ENCODE measurements at regions of chr3 and their contacts with region 1.

Region 1: GRCh38 chr3:130759699-130760338 is 13.2 kb upstream of the PIK3R4 start:
- DNase-seq: peak; percentile 66
- CTCF ChIP-seq: peak; percentile 74

Region 2: GRCh38 chr3:130870423-130870822 is 110.6 kb after region 1 on chr3:
- in situ Hi-C with region 1: no loop called
- DNase-seq: no peak
- CTCF ChIP-seq: no peak

Region 3: DNA sequence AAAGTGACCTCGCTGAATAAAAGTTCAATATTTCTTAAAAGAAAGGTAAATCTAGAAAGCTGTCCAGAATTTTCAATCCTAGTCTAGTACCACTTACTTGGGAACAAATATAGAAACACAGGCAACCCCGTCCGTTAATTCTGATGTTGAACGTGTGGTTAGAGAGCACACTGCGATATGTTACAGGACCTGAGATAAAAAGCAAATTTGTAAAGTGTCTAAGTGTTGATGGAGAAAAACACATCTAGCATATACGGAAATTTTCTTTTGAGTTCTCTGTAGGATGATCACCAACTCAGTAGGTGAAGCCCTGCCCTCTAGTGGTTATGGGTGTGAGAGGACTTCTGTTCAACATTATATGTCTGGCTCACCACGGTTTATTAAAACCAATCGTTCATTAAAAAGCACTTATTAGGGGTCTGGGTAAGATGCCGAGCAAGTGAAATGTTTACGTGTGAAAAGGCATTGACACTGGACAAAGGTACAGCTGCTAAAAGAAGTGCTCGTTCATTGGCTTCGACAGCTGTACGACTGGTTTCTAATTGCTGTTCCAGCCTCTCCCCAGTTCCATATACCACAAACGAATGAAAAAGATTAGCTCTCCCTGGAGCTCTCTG is 133.0 kb after region 1 on chr3:
- in situ Hi-C with region 1: loop called (anchors 10 kb)
- DNase-seq: peak; percentile 79
- CTCF ChIP-seq: peak; percentile 79

Region 4: GRCh38 chr3:130997291-130997690 is 237.5 kb after region 1 on chr3:
- in situ Hi-C with region 1: loop called (anchors 25 kb)
- DNase-seq: no peak
- CTCF ChIP-seq: no peak

Measured in GM13977 (cell line).